ENCODE measurements at regions of chr17 and their contacts with region 1.

Region 1: DNA sequence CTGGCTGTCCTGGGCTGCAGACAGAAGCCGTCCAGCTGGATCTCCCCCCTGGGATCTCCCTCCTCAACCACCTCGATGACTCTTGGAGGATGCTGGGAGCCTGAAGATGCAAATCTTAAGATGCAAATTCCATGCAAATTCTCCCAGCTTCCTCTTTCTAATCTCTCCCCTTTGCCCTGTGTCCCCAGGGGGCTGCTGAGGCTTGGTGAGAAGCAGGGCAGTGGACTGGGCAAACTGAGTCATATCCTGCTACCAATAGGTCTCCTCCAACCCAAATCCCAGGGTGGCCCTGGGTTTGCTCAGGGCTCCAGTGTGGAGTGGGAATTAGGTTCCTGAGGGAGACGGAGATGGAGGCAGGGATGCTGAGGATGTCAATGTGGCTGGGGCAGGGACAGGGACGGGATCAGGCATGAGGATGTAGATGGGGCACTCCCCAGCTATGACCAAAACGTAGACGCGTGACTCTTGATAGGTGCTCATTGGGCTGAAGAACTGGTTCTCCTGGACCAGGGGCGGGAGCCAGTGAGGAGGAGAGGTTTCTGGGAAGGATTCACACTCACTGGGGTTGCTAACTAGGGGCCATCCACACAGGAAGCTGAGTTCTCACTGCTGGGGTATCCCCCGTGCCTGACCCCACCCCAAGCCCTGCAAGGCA is 3.6 kb upstream of the ALOX12B start:
- DNase-seq: no peak
- H3K4me3 ChIP-seq: no peak overlapping the region
- H3K27ac ChIP-seq: no peak overlapping the region
- H3K4me1 ChIP-seq: no peaks in the 10 kb centered on the region
- H3K27me3 ChIP-seq: peaks cover 14% of the 10 kb centered on the region
- CTCF ChIP-seq: no peak

Region 2: DNA sequence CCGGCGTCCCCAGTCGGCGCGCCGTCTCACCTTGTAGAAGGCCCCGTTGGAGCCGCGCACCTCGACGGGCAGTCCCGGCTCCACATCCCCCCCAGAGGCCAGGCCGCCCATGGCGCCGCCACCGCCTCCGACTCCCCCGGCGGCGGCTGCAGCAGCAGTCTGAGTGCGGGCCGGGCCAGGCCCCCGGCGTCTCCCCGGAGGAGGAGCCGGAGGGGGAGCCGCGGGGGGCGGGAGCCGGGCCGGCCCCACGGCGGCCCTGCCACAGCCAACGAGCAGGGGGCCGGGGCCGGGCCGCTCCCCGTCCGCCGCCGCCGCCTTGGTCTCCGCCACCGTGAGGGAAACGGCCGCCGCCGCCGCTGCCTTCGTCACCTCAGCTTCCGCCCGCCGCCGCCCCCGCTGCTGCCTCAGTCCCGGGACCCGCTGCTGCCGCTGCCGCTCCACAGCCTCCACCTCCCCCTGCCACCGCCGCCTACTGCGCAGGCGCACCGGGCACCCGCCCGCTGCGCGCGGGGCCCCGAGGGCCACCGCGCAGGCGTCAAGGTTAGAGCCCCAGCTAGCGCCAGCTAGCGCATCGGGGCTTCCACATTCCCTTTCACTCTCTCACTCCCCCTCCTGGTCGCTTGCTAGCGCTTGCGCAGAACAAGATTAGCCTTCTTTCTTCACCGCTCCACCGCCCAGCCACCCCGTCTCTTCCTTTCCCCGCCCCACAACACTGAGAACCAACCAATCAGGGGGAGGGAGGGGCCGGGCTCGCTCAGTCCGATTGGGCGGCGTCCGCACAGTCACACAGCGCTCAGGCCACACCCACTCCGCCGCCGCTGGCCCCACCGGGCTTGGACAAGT is 476.5 kb before region 1 on chr17 and contains the start of gene FXR2:
- CTCF ChIA-PET with region 1: interaction called, 11 read pairs
- POLR2A ChIA-PET with region 1: no interaction called
- intact Hi-C with region 1: no loop called
- DNase-seq: peak; percentile 100
- H3K4me3 ChIP-seq: peak within 1 kb of the TSS; percentile 92
- H3K27ac ChIP-seq: peak within 1 kb of the TSS; percentile 91
- H3K4me1 ChIP-seq: peaks cover 20% of the 10 kb centered on the region
- H3K27me3 ChIP-seq: no peaks in the 10 kb centered on the region
- CTCF ChIP-seq: peak; percentile 65
- total RNA-seq, gene FXR2: 101 TPM in 2 replicates